Activated naive CD4-positive, alpha-beta T cell treated with anti-CD3 and anti-CD28 coated beads for 36 hours (primary cell): ENCODE measurements at regions of chr6 and their contacts with region 1.

Region 1: DNA sequence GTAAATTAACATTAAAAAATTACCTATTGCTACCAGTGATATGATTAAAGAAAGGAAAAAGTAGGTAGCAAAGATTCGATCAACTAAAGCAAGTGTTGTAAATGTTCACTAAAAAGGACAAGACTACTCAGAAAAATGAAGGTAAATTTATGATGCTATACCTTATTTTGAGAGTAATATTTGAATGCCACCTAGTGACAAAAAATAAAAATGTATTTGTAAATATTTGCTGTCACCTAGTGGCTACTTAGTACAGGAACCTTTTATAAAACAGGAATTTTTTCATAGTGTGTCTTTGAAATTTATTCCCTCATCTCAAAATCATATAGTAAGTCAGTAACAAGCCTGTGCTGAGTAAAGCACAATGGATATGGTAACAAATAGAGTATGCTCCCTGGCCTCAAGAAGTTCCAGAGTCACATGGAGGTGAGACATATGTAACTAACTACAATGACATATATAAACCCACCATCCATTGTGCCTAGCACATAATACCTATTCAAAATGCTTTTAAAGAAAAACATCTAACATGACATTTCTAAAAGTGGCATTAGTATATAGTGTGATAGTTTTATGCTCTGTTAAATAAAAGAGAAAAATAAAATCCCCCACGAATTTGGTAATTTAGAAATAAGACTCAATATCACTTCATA is 193.1 kb upstream of the SIM1 start:
- DNase-seq: no peak
- H3K4me3 Mint-ChIP-seq: no peak overlapping the region
- H3K27ac Mint-ChIP-seq: no peak overlapping the region
- H3K4me1 Mint-ChIP-seq: no peaks in the 10 kb centered on the region
- H3K27me3 Mint-ChIP-seq: no peaks in the 10 kb centered on the region

Region 2: DNA sequence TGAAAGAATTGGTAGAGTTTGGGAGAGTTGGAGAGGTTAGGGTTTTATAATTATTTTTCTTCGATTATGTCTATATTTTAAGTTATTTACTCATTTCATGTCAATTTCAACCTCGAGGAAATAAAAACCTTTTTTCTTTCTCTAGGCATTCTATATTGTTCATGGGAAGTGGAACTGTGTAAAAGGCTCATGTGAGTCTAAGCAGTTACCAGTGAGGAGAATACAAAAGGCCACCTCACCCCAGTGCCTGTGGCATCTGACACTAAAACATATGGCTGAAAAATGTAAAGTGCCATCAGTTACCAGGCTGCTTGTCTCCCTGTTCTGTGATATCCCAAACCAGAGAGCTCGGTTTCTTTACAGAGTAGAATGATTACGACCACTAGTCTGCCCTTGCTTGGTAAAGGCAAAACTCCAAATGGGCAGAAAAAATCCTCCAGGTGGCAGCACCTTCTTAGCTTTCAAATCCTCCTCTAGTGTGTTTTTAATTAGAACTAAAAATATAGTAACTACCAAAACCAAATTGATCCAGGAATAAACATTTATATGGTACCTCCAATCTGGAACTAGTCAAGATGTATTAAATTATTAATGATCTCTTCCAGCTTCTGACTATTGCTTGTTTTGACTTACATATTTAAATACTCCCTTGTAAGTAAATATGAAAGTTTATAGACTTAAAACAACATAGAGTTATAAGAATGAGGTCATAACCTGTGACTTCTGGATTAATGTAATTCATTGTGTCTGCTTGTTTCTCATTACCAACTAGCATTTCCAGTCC is 541.2 kb before region 1 on chr6:
- CTCF ChIA-PET with region 1: interaction called, 3 read pairs
- intact Hi-C with region 1: loop called (anchors 2 kb)
- DNase-seq: peak; percentile 42
- H3K4me3 Mint-ChIP-seq: no peak overlapping the region
- H3K27ac Mint-ChIP-seq: no peak overlapping the region
- H3K4me1 Mint-ChIP-seq: no peaks in the 10 kb centered on the region
- H3K27me3 Mint-ChIP-seq: peaks cover 9% of the 10 kb centered on the region

Region 3: GRCh38 chr6:100311707-100312251 is 346.0 kb before region 1 on chr6:
- CTCF ChIA-PET with region 1: no interaction called
- intact Hi-C with region 1: no loop called
- DNase-seq: no peak
- H3K4me3 Mint-ChIP-seq: no peak overlapping the region
- H3K27ac Mint-ChIP-seq: no peak overlapping the region
- H3K4me1 Mint-ChIP-seq: no peaks in the 10 kb centered on the region
- H3K27me3 Mint-ChIP-seq: no peaks in the 10 kb centered on the region

Region 4: GRCh38 chr6:100593522-100593921 is 64.3 kb before region 1 on chr6:
- CTCF ChIA-PET with region 1: no interaction called
- intact Hi-C with region 1: no loop called
- DNase-seq: no peak
- H3K4me3 Mint-ChIP-seq: no peak overlapping the region
- H3K27ac Mint-ChIP-seq: no peak overlapping the region
- H3K4me1 Mint-ChIP-seq: peaks cover 2% of the 10 kb centered on the region
- H3K27me3 Mint-ChIP-seq: no peaks in the 10 kb centered on the region

Region 5: GRCh38 chr6:100751590-100751989 is 93.8 kb after region 1 on chr6:
- CTCF ChIA-PET with region 1: no interaction called
- intact Hi-C with region 1: no loop called
- DNase-seq: no peak
- H3K4me3 Mint-ChIP-seq: no peak overlapping the region
- H3K27ac Mint-ChIP-seq: no peak overlapping the region
- H3K4me1 Mint-ChIP-seq: no peaks in the 10 kb centered on the region
- H3K27me3 Mint-ChIP-seq: no peaks in the 10 kb centered on the region